Activated T-helper 1 cell treated with anti-CD3 and anti-CD28 coated beads, Interleukin-12 subunit alpha, Interleukin-12 subunit beta, Interleukin-2, Interleukin-4 antibody, amounts not matched to agents 30 ng/mL and 10 ng/mL and 1 ng/mL, durations not matched to agents 14 hours and 24 hours and 36 hours (primary cell): ENCODE measurements at regions of chr1 and their contacts with region 1.

Region 1: GRCh38 chr1:158329733-158330132 is 1.6 kb downstream of the CD1B start:
- DNase-seq: no peak
- H3K4me3 Mint-ChIP-seq: no peak overlapping the region
- H3K27ac Mint-ChIP-seq: no peak overlapping the region
- H3K4me1 Mint-ChIP-seq: peaks cover 9% of the 10 kb centered on the region
- H3K27me3 Mint-ChIP-seq: peaks cover 2% of the 10 kb centered on the region

Region 2: DNA sequence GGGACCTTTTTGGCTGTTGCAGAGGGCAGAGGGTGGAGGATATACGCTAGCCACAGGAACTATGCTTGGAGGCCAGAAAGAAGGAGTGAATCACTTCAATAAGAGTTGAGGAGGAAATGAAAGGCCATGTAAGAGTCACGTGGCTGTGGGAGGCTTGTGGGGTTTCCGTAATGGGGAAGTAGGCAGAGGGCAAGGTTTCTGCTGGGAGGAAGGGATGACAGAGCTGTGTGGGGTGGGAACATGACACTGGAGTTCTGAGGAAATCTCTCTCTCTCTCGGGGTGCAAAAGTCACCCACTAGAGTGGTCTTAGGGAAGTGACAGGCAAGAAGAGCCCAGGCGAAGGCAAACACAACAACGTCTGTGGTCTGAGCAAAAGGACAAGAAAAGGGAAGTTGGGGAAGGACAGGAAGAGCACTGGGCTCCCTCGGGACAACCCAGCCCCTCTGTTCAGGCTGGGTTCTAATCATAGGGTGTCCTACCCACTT is 43.9 kb before region 1 on chr1:
- intact Hi-C with region 1: loop called (anchors 1 kb)
- DNase-seq: no peak
- H3K4me3 Mint-ChIP-seq: no peak overlapping the region
- H3K27ac Mint-ChIP-seq: peak overlapping the region; percentile 68
- H3K4me1 Mint-ChIP-seq: peaks cover 21% of the 10 kb centered on the region
- H3K27me3 Mint-ChIP-seq: peaks cover 5% of the 10 kb centered on the region

Region 3: DNA sequence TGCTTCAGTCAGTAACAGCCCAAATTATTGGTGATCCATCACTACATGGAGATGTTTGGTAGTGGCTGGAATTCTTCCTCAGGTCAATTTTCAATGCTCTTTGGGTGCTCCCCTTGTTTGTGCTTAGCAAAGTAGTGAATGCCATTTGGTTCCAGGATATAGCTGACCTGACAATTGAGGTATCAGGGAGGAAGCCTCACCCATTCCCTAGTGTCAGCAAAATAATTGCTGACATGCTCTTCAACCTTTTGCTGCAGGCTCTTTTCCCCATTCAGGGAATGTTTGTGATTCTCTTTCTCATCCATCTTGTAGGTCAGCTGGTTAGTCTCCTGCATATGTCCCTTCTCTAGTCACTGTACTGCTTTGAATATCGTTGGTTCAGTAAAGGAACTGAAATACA is 124.8 kb after region 1 on chr1:
- intact Hi-C with region 1: no loop called
- DNase-seq: no peak
- H3K4me3 Mint-ChIP-seq: no peak overlapping the region
- H3K27ac Mint-ChIP-seq: no peak overlapping the region
- H3K4me1 Mint-ChIP-seq: no peaks in the 10 kb centered on the region
- H3K27me3 Mint-ChIP-seq: peaks cover 2% of the 10 kb centered on the region